ENCODE measurements at regions of chr4 and their contacts with region 1.

Region 1: GRCh38 chr4:142347241-142347640 is 498.9 kb downstream of the INPP4B start:
- DNase-seq: no peak
- H3K4me3 Mint-ChIP-seq: peak overlapping the region; percentile 48
- H3K27ac Mint-ChIP-seq: no peak overlapping the region
- H3K4me1 Mint-ChIP-seq: peaks cover 45% of the 10 kb centered on the region
- H3K27me3 Mint-ChIP-seq: no peaks in the 10 kb centered on the region

Region 2: GRCh38 chr4:142194905-142195304 is 152.3 kb before region 1 on chr4:
- intact Hi-C with region 1: no loop called
- DNase-seq: no peak
- H3K4me3 Mint-ChIP-seq: no peak overlapping the region
- H3K27ac Mint-ChIP-seq: no peak overlapping the region
- H3K4me1 Mint-ChIP-seq: no peaks in the 10 kb centered on the region
- H3K27me3 Mint-ChIP-seq: no peaks in the 10 kb centered on the region

Region 3: GRCh38 chr4:142331132-142331531 is 16.1 kb before region 1 on chr4:
- intact Hi-C with region 1: loop called (anchors 2 kb)
- DNase-seq: peak; percentile 50
- H3K4me3 Mint-ChIP-seq: no peak overlapping the region
- H3K27ac Mint-ChIP-seq: no peak overlapping the region
- H3K4me1 Mint-ChIP-seq: peaks cover 18% of the 10 kb centered on the region
- H3K27me3 Mint-ChIP-seq: no peaks in the 10 kb centered on the region

Region 4: DNA sequence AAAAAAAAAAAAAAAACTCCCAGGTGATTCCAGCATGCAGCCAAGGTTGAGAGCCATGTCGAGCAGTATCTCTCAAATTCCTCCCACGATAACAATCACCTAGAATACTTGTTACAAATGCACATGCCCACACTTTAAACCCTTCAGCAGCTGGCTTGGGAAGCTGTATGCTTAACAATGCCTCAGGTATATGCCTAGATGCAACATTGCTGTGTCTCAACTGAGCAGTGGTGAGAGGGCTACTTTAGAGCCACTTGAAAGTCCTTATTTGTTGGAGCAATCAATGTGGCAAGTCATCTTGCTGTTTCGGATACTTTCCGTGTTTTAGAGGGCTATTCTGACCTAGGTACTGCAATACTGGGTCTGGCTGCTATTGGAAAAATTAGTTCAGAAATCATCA is 11.4 kb after region 1 on chr4:
- intact Hi-C with region 1: loop called (anchors 1 kb)
- DNase-seq: peak; percentile 60
- H3K4me3 Mint-ChIP-seq: peak overlapping the region; percentile 28
- H3K27ac Mint-ChIP-seq: peak overlapping the region; percentile 61
- H3K4me1 Mint-ChIP-seq: peaks cover 60% of the 10 kb centered on the region
- H3K27me3 Mint-ChIP-seq: no peaks in the 10 kb centered on the region

Measured in activated CD4-positive, alpha-beta T cell treated with anti-CD3 and anti-CD28 coated beads, Interleukin-2, amount 10 ng/mL, durations not matched to agents 24 days and 14 days (primary cell).